ENCODE measurements at regions of chr3 and their contacts with region 1.

Region 1: DNA sequence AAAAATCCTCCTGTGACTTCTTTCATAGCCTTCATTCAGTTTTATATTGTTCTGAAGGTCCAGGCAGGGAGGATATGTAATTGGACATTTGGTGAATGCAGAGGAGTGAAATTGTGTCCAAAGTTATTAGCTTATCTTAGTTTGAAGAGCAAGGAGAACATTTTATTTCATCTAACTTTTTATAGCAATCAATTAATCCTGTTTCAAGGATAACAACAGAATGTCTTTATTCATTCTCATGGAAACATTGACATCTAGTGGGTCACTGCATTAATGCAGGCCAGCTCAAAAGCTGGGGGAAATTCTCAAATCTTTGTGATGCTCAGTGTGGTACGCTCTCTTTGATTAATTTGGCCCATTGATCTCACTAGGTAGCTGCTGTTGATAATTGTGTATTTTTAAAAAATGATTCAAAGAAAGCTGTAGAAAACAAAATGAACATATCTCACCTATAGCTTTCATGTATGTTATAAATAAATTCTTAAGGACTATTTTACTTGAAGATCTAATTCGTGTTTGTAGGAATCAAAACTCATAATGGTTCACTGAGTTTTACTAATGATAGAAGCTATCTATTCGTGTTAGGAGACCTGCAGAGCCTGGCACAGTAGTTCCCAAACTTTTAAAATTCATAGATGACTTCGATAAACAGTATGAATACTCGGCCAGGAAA is 150.8 kb upstream of the KCNMB2 start:
- DNase-seq: peak; percentile 71
- H3K4me3 ChIP-seq: no peak overlapping the region
- H3K27ac ChIP-seq: no peak overlapping the region
- H3K4me1 ChIP-seq: peaks cover 35% of the 10 kb centered on the region
- H3K27me3 ChIP-seq: no peaks in the 10 kb centered on the region
- CTCF ChIP-seq: peak; percentile 53 to 77
- POLR2A ChIP-seq: no peak

Region 2: DNA sequence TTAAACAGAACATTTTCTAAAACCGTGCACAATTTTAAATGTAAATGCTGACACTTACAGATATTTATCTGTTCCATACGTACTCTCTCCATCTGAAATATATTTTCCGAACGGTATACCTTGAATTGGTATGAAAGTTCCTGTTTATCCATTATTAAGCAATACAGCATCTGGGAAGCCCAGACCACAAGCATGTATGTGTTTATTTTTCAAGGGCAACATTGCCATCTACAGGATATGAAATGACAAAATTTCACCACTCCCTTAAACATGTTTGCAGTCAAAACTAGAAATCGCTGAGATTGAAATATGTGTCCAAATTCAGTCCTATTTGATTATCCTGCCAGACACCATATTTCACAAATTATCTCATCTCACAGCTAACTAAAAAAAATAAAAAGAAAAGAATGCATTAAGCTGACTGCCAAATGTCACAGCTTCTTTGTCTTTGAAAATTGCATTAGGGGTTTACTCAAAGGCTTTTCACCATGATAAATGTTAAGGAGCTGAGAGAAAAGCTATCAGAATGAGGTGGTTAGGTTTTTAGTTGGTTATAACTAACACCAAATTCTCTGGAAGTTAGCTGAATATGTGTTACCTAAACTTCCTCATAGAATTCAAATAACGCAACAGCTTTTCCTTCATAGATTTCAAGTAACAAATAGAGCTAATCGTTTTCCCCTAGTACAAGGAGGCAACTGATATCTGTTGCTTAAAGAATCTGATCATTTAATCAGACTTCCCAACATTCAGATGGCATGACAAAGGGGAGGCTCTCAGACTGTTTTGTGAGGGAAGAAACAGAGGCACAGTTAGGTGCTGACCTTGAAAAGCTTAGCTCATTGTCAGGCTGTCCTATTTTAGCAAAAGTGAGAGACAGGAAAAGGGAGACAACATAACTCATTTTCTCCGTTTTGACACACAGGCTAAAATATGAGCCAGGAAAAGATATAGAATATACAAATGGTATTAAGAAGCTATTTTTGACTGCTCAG is 1721.3 kb before region 1 on chr3:
- CTCF ChIA-PET with region 1: interaction called, 7 read pairs
- POLR2A ChIA-PET with region 1: no interaction called
- dilution Hi-C with region 1: no loop called
- intact Hi-C with region 1: loop called (anchors 2 kb)
- DNase-seq: peak; percentile 80
- H3K4me3 ChIP-seq: no peak overlapping the region
- H3K27ac ChIP-seq: peak overlapping the region; percentile 68
- H3K4me1 ChIP-seq: peaks cover 23% of the 10 kb centered on the region
- H3K27me3 ChIP-seq: no peaks in the 10 kb centered on the region
- CTCF ChIP-seq: no peak
- POLR2A ChIP-seq: no peak

Region 3: GRCh38 chr3:177144923-177145780 is 1240.3 kb before region 1 on chr3:
- CTCF ChIA-PET with region 1: no interaction called
- POLR2A ChIA-PET with region 1: no interaction called
- dilution Hi-C with region 1: no loop called
- intact Hi-C with region 1: loop called (anchors 10 kb)
- DNase-seq: no peak
- H3K4me3 ChIP-seq: no peak overlapping the region
- H3K27ac ChIP-seq: no peak overlapping the region
- H3K4me1 ChIP-seq: no peaks in the 10 kb centered on the region
- H3K27me3 ChIP-seq: no peaks in the 10 kb centered on the region
- CTCF ChIP-seq: no peak
- POLR2A ChIP-seq: no peak

Region 4: GRCh38 chr3:177624514-177625495 is 760.6 kb before region 1 on chr3:
- CTCF ChIA-PET with region 1: interaction called, 4 read pairs
- POLR2A ChIA-PET with region 1: no interaction called
- dilution Hi-C with region 1: no loop called
- intact Hi-C with region 1: loop called (anchors 5 kb)
- DNase-seq: peak; percentile 77
- H3K4me3 ChIP-seq: no peak overlapping the region
- H3K27ac ChIP-seq: no peak overlapping the region
- H3K4me1 ChIP-seq: peaks cover 13% of the 10 kb centered on the region
- H3K27me3 ChIP-seq: no peaks in the 10 kb centered on the region
- CTCF ChIP-seq: no peak
- POLR2A ChIP-seq: no peak

Region 5: DNA sequence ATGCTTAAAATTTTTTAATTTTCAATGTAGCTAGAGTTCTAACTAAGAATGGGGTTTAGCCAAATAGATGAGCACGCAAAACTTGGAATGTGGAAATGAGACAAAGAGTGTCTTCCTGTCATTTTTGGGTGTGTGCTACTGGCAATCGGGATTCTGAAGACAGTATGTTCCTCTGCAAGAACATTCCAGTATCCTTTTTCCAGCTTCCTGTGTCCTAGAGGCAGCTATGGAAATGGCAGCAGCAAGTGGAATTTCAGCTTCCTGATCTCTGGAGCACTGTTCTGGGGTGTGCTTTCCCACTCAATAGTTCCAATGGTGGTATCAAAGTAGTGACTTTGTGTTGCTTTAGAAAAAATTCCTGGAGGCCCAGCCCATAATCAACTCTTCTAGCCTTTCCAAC is 492.1 kb before region 1 on chr3:
- CTCF ChIA-PET with region 1: interaction called, 5 read pairs
- POLR2A ChIA-PET with region 1: no interaction called
- dilution Hi-C with region 1: no loop called
- intact Hi-C with region 1: loop called (anchors 1 kb)
- DNase-seq: peak; percentile 35
- H3K4me3 ChIP-seq: no peak overlapping the region
- H3K27ac ChIP-seq: peak overlapping the region; percentile 66
- H3K4me1 ChIP-seq: peaks cover 21% of the 10 kb centered on the region
- H3K27me3 ChIP-seq: no peaks in the 10 kb centered on the region
- CTCF ChIP-seq: peak; percentile 16 to 28
- POLR2A ChIP-seq: no peak

Region 6: GRCh38 chr3:178155521-178155920 is 229.9 kb before region 1 on chr3:
- CTCF ChIA-PET with region 1: interaction called, 3 read pairs
- POLR2A ChIA-PET with region 1: no interaction called
- dilution Hi-C with region 1: no loop called
- intact Hi-C with region 1: loop called (anchors 1 kb)
- DNase-seq: no peak
- H3K4me3 ChIP-seq: no peak overlapping the region
- H3K27ac ChIP-seq: no peak overlapping the region
- H3K4me1 ChIP-seq: peaks cover 20% of the 10 kb centered on the region
- H3K27me3 ChIP-seq: no peaks in the 10 kb centered on the region
- CTCF ChIP-seq: no peak
- POLR2A ChIP-seq: no peak

Region 7: DNA sequence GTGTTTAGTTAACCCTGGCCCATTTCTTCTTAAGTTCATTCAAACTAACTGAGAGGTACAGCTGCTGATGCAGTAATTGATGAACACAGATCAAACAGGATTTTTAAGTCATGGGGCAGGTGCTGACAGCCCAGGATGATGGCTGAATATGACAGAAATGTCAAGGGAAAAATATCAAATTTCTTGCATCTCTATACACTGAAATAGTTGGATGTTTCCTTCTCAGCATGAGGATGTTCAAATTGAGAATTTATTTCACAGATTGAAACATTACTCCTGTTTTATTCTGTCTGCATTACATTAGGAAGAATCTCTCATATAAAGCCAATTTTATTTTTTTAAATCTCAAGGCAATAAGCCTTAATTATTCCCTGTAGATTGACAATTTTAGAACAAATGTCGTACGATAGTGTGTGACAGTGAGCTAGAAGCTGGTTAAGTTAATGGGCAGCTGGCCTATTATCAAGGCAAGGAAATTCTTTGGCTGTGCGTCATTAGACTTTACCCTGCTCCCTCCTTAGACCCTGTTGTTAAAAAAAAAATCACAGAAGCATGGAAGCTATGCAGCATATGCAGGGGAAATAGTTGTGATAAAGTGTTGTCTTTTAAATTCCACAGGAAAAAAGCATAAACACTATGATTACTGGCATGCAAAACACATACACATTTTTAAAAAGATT is 33.0 kb before region 1 on chr3:
- CTCF ChIA-PET with region 1: interaction called, 7 read pairs
- POLR2A ChIA-PET with region 1: no interaction called
- dilution Hi-C with region 1: no loop called
- intact Hi-C with region 1: loop called (anchors 1 kb)
- DNase-seq: peak; percentile 90
- H3K4me3 ChIP-seq: no peak overlapping the region
- H3K27ac ChIP-seq: peak overlapping the region; percentile 89
- H3K4me1 ChIP-seq: peaks cover 21% of the 10 kb centered on the region
- H3K27me3 ChIP-seq: no peaks in the 10 kb centered on the region
- CTCF ChIP-seq: no peak
- POLR2A ChIP-seq: no peak

Measured in endothelial cell of umbilical vein (primary cell).